K562 (cell line): ENCODE measurements at regions of chr2 and their contacts with region 1.

Region 1: GRCh38 chr2:102355526-102356380 is at the start of gene IL18R1:
- DNase-seq: peak; percentile 58 to 84 (median 71)
- ATAC-seq: peak; percentile 100
- H3K4me3 ChIP-seq: peak within 1 kb of the TSS; percentile 69
- H3K27ac ChIP-seq: peak within 1 kb of the TSS; percentile 47; the same call in 2 of the 3 replicates
- H3K4me1 ChIP-seq: peaks cover 0 to 12% of the 10 kb centered on the region in 2 experiments; a peak in 2 of 5 replicates
- H3K27me3 ChIP-seq: no peaks in the 10 kb centered on the region
- CTCF ChIP-seq: peak; percentile 82 to 94 (median 90)
- EP300 ChIP-seq: no peak
- POLR2A ChIP-seq: no peak
- RAD21 ChIP-seq: peak; percentile 97 to 99
- polyA plus RNA-seq, gene IL18R1: 0.55 to 0.81 TPM

Region 2: GRCh38 chr2:101892377-101892776 is 463.4 kb before region 1 on chr2:
- CTCF ChIA-PET with region 1: no interaction called
- POLR2A ChIA-PET with region 1: no interaction called
- in situ Hi-C with region 1: no loop called
- intact Hi-C with region 1: no loop called
- DNase-seq: no peak
- ATAC-seq: no peak
- H3K4me3 ChIP-seq: no peak overlapping the region
- H3K27ac ChIP-seq: no peak overlapping the region
- H3K4me1 ChIP-seq: no peaks in the 10 kb centered on the region
- H3K27me3 ChIP-seq: no peaks in the 10 kb centered on the region
- CTCF ChIP-seq: no peak
- EP300 ChIP-seq: no peak
- POLR2A ChIP-seq: no peak
- RAD21 ChIP-seq: no peak

Region 3: GRCh38 chr2:102005989-102006885 is 349.5 kb before region 1 on chr2:
- CTCF ChIA-PET with region 1: no interaction called
- POLR2A ChIA-PET with region 1: no interaction called
- in situ Hi-C with region 1: loop called (anchors 10 kb)
- intact Hi-C with region 1: loop called (anchors 5 kb)
- DNase-seq: peak; percentile 66 to 76 (median 68)
- ATAC-seq: peak; percentile 98
- H3K4me3 ChIP-seq: no peak overlapping the region
- H3K27ac ChIP-seq: no peak overlapping the region
- H3K4me1 ChIP-seq: peaks cover 0 to 5% of the 10 kb centered on the region in 2 experiments; a peak in 1 of 5 replicates
- H3K27me3 ChIP-seq: peaks cover 4 to 25% of the 10 kb centered on the region in 2 experiments; a peak in 3 of 5 replicates
- CTCF ChIP-seq: peak; percentile 66 to 86 (median 80)
- EP300 ChIP-seq: no peak
- POLR2A ChIP-seq: no peak
- RAD21 ChIP-seq: peak; percentile 62 to 82

Region 4: GRCh38 chr2:102301867-102302362 is 53.8 kb before region 1 on chr2:
- CTCF ChIA-PET with region 1: interaction called, 3 read pairs
- POLR2A ChIA-PET with region 1: no interaction called
- in situ Hi-C with region 1: no loop called
- intact Hi-C with region 1: loop called (anchors 5 kb)
- DNase-seq: peak in 2 of 4 experiments; percentile 23 to 60
- ATAC-seq: peak; percentile 95
- H3K4me3 ChIP-seq: no peak overlapping the region
- H3K27ac ChIP-seq: no peak overlapping the region
- H3K4me1 ChIP-seq: peaks cover 0 to 14% of the 10 kb centered on the region in 2 experiments; a peak in 1 of 5 replicates
- H3K27me3 ChIP-seq: no peaks in the 10 kb centered on the region
- CTCF ChIP-seq: peak; percentile 31 to 66 (median 65); a peak in 5 of 6 replicates
- EP300 ChIP-seq: no peak
- POLR2A ChIP-seq: no peak
- RAD21 ChIP-seq: peak; percentile 64 to 71

Region 5: DNA sequence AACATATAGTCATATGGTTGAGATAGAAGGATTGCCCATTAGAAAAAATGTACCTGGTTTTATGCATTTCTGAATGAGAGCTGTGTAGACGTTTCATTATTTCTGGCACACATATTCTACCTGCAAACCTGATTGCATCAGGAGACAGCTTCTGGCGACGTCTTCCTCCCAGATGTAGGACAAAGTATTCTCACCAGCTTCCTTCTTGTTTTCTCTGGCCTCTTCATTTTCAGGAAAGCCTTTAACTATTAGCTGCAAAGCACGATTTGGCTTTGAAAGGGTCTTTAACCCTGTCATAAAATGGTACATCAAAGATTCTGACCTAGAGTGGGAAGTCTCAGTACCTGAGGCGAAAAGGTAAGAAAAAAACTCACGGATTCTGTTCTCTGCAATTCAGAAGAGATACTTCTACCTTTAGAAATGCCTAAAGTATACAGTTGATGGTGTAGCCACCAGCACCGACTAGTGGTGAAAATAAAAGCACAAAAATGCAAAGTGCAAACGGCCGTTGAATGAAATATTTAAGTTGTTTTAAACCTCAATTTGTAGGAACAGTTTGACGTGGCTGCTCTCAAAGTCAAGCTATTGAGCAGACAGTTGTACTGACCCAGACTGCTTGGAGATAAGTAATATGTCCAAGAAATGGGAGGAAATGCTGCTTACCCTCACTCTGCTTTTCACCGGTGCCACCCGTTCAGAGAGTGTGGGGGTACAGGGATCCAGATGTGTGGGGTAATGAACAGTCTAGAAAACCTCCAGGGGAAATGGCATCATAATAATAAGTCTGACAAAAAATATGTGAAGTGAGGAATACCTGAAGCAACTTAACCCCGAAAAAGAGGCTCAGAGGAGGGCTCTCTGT is 87.4 kb after region 1 on chr2:
- CTCF ChIA-PET with region 1: interaction called, 13 read pairs
- POLR2A ChIA-PET with region 1: no interaction called
- in situ Hi-C with region 1: loop called (anchors 5 kb)
- intact Hi-C with region 1: loop called (anchors 1 kb)
- DNase-seq: peak in 3 of 4 experiments; percentile 17 to 65 (median 34)
- ATAC-seq: peak; percentile 85
- H3K4me3 ChIP-seq: no peak overlapping the region
- H3K27ac ChIP-seq: no peak overlapping the region
- H3K4me1 ChIP-seq: peaks cover 9 to 17% of the 10 kb centered on the region in 2 experiments; a peak in 4 of 5 replicates
- H3K27me3 ChIP-seq: no peaks in the 10 kb centered on the region
- CTCF ChIP-seq: peak; percentile 71 to 91 (median 87)
- EP300 ChIP-seq: no peak
- POLR2A ChIP-seq: no peak
- RAD21 ChIP-seq: peak; percentile 89 to 96

Region 6: DNA sequence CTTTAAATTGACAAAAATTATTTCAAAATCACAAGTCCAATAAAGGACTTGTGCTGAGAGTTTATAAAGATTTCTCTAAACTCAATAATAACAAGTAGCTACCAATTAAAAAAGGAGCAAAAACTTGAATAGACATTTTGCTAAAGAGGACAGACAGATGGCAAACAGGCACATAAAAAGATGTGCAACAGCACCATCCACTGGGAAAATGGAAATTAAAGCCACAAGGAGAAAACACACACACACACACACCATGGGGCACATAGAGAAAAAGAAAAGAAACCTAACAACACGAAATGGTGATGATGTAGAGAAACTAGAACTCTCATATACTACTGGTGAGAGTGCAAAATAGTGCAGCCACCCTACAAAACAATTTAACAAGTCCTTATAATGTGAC is 104.7 kb after region 1 on chr2:
- CTCF ChIA-PET with region 1: no interaction called
- POLR2A ChIA-PET with region 1: no interaction called
- in situ Hi-C with region 1: no loop called
- intact Hi-C with region 1: loop called (anchors 5 kb)
- DNase-seq: peak in 1 of 4 experiments; percentile 24
- ATAC-seq: peak; percentile 57; the same call in 2 of the 3 replicates
- H3K4me3 ChIP-seq: no peak overlapping the region
- H3K27ac ChIP-seq: no peak overlapping the region
- H3K4me1 ChIP-seq: no peaks in the 10 kb centered on the region
- H3K27me3 ChIP-seq: peaks cover 5 to 7% of the 10 kb centered on the region in 2 experiments; a peak in 3 of 5 replicates
- CTCF ChIP-seq: peak; percentile 25 to 48 (median 47); a peak in 5 of 6 replicates
- EP300 ChIP-seq: no peak
- POLR2A ChIP-seq: no peak
- RAD21 ChIP-seq: peak; percentile 48 to 74